H1 (cell line): ENCODE measurements at regions of chr10 and their contacts with region 1.

Region 1: DNA sequence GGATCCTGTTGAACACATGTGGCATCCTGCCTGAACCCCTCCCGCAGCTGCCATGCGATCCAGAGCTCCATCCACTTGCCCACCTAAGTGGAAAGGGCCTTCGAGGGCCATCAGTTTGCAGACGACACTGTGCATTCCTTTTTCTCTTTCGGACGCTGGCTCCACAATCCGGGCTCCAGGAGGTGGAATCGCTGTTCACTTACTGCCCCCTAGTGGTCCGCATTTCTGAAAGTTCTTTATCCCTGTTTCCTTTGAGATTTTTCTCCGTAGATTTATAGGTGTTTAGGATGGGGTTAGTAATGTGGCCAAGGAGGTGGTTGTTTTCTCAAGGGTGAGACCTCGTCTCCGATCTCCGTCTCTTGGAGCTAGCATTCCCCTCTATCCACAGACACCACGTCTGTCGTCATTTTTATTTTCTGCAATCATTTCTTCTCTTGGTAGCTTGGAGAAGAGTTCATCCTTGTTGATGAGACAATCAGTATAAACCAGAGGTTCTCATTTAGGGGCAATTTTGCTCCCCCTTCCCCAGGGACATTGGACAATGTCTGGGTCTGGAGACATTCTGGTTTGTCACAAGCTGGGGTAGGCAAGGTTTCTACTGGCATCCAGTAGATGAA is 204.6 kb downstream of the ARHGAP21 start:
- DNase-seq: peak in 1 of 2 experiments; percentile 79
- H3K4me3 ChIP-seq: no peak overlapping the region
- H3K27ac ChIP-seq: no peak overlapping the region
- H3K4me1 ChIP-seq: peaks cover 0 to 3% (median 3%) of the 10 kb centered on the region in 4 experiments; a peak in 4 of 7 replicates
- H3K27me3 ChIP-seq: no peaks in the 10 kb centered on the region
- CTCF ChIP-seq: peak; percentile 56 to 77 (median 66)
- EP300 ChIP-seq: no peak
- POLR2A ChIP-seq: no peak
- RAD21 ChIP-seq: peak; percentile 79 to 82

Region 2: GRCh38 chr10:24383681-24384106 is 135.4 kb before region 1 on chr10:
- CTCF ChIA-PET with region 1: interaction called, 11 read pairs
- POLR2A ChIA-PET with region 1: no interaction called
- DNase-seq: peak; percentile 75
- H3K4me3 ChIP-seq: no peak overlapping the region
- H3K27ac ChIP-seq: peak overlapping the region; percentile 33; the same call in 1 of the 2 replicates
- H3K4me1 ChIP-seq: peaks cover 6 to 16% (median 11%) of the 10 kb centered on the region in 4 experiments
- H3K27me3 ChIP-seq: no peaks in the 10 kb centered on the region
- CTCF ChIP-seq: peak; percentile 60 to 84 (median 79)
- EP300 ChIP-seq: peak in 1 of 2 experiments; percentile 46; a peak in 1 of 3 replicates
- POLR2A ChIP-seq: no peak
- RAD21 ChIP-seq: peak; percentile 69 to 77

Region 3: GRCh38 chr10:24415455-24416125 is 103.5 kb before region 1 on chr10:
- CTCF ChIA-PET with region 1: interaction called, 13 read pairs
- POLR2A ChIA-PET with region 1: no interaction called
- DNase-seq: no peak
- H3K4me3 ChIP-seq: no peak overlapping the region
- H3K27ac ChIP-seq: no peak overlapping the region
- H3K4me1 ChIP-seq: peaks cover 0 to 3% (median 0%) of the 10 kb centered on the region in 4 experiments; a peak in 1 of 7 replicates
- H3K27me3 ChIP-seq: no peaks in the 10 kb centered on the region
- CTCF ChIP-seq: no peak
- EP300 ChIP-seq: no peak
- POLR2A ChIP-seq: no peak
- RAD21 ChIP-seq: no peak

Region 4: GRCh38 chr10:24440817-24441797 is 78.0 kb before region 1 on chr10:
- CTCF ChIA-PET with region 1: interaction called, 15 read pairs
- POLR2A ChIA-PET with region 1: no interaction called
- DNase-seq: no peak
- H3K4me3 ChIP-seq: no peak overlapping the region
- H3K27ac ChIP-seq: no peak overlapping the region
- H3K4me1 ChIP-seq: peaks cover 0 to 11% (median 4%) of the 10 kb centered on the region in 4 experiments; a peak in 5 of 7 replicates
- H3K27me3 ChIP-seq: no peaks in the 10 kb centered on the region
- CTCF ChIP-seq: no peak
- EP300 ChIP-seq: no peak
- POLR2A ChIP-seq: no peak
- RAD21 ChIP-seq: no peak

Region 5: GRCh38 chr10:24544776-24545175 is 25.7 kb after region 1 on chr10:
- CTCF ChIA-PET with region 1: interaction called, 18 read pairs
- POLR2A ChIA-PET with region 1: no interaction called
- DNase-seq: no peak
- H3K4me3 ChIP-seq: no peak overlapping the region
- H3K27ac ChIP-seq: no peak overlapping the region
- H3K4me1 ChIP-seq: no peaks in the 10 kb centered on the region
- H3K27me3 ChIP-seq: no peaks in the 10 kb centered on the region
- CTCF ChIP-seq: no peak
- EP300 ChIP-seq: no peak
- POLR2A ChIP-seq: no peak
- RAD21 ChIP-seq: no peak

Region 6: GRCh38 chr10:24556750-24557742 is 38.0 kb after region 1 on chr10:
- CTCF ChIA-PET with region 1: interaction called, 28 read pairs
- POLR2A ChIA-PET with region 1: no interaction called
- DNase-seq: no peak
- H3K4me3 ChIP-seq: no peak overlapping the region
- H3K27ac ChIP-seq: no peak overlapping the region
- H3K4me1 ChIP-seq: peaks cover 0 to 3% (median under 1%) of the 10 kb centered on the region in 4 experiments; a peak in 5 of 7 replicates
- H3K27me3 ChIP-seq: no peaks in the 10 kb centered on the region
- CTCF ChIP-seq: peak in 2 of 3 experiments; percentile 65 to 73; a peak in 3 of 4 replicates
- EP300 ChIP-seq: no peak
- POLR2A ChIP-seq: no peak
- RAD21 ChIP-seq: peak; percentile 86 to 89